Prostate gland (tissue), 2 donors: ENCODE measurements at regions of chr6 and their contacts with region 1.

Region 1: GRCh38 chr6:138428944-138429598 is 25.0 kb downstream of the HEBP2 start:
- DNase-seq: no peak
- H3K4me3 ChIP-seq: no peak overlapping the region
- H3K27ac ChIP-seq: no peak overlapping the region
- H3K4me1 ChIP-seq: no peaks in the 10 kb centered on the region
- H3K27me3 ChIP-seq: no peaks in the 10 kb centered on the region
- CTCF ChIP-seq: peak; percentile 34 to 79 (median 72)
- POLR2A ChIP-seq: no peak

Region 2: DNA sequence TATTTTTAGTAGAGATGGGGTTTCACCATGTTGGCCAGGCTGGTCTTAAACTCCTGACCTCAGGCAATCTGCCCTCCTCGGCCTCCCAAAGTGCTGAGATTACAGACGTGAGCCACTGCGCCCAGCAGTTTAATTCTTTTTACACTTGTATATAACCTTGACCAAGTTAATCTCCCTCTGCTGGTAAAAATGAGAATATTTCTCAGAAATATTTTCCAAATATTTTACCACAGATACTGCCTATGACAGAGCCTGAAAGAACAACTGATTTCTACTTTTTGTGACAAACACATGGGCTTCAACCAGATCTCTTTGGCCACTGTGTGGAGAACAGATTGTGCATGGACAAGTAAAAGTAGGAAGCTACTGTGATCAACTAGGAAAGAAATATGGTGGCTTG is 91.4 kb after region 1 on chr6:
- intact Hi-C with region 1: loop called (anchors 5 kb)
- DNase-seq: no peak
- H3K4me3 ChIP-seq: no peak overlapping the region
- H3K27ac ChIP-seq: no peak overlapping the region
- H3K4me1 ChIP-seq: no peaks in the 10 kb centered on the region
- H3K27me3 ChIP-seq: no peaks in the 10 kb centered on the region
- CTCF ChIP-seq: peak in 2 of 4 experiments; percentile 14 to 44
- POLR2A ChIP-seq: no peak

Region 3: DNA sequence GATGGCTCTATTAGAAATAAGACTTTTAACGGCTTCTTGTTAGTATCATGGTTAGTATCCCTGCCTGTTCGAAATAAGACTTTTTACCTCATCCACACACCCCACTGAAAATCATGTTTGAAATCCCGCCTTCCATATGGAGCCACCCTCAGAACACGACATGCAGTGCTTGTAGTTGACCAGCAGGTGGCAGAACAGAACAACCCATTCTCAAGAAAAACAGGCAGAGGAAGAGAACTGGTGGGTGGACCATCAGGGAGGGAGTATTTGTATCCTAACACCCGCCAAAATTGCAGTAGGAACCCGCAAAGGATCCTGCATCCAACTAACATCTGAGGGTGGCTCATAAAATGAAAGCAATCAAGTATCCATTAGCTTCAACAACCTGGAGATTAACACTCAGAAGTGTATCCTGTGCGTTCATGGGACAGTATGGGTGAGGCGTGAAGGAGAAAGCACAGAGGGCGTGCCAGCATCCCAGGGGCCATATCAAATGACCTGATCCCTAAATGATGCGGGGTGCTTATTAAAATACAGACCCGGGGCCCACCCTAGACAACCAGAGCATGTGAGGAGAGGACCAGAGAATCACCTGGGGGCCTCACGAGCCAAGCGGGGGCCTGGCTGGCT is 159.8 kb after region 1 on chr6:
- intact Hi-C with region 1: loop called (anchors 10 kb)
- DNase-seq: peak; percentile 52
- H3K4me3 ChIP-seq: no peak overlapping the region
- H3K27ac ChIP-seq: no peak overlapping the region
- H3K4me1 ChIP-seq: no peaks in the 10 kb centered on the region
- H3K27me3 ChIP-seq: no peaks in the 10 kb centered on the region
- CTCF ChIP-seq: peak; percentile 78 to 90 (median 86)
- POLR2A ChIP-seq: no peak

Region 4: DNA sequence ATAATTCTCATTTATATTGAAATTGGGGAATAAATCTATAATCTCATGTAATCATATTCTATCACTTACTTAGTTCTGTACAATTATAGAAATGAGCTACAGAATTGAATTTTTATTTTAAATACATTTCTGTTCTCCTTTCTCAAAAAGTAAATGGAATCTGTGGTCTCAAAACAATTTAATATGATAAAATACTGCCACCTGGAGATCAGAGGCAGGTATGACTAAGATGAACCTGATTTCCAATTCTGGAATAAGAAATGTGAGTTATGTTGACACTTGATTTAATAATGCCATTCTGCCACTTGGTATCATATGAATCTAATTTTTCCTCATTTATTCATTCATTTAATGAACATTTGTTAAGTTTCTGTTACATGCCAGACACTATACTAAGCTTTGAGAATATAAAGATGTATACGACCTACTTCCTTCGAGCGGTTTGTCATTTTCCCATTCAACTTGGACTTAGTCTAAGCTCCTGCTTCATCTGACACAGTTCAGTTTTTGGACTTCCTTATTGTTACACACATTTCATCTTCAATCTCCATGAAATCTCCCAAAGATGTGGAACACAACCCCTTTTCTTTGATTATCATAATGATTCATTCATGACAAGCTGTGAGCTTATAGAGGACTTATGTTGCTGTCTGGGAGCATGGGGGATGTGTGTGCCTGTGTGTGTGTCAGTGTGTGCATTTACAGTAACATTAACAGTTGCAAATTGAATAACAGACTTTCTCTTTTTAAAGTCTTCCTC is 337.0 kb after region 1 on chr6:
- intact Hi-C with region 1: loop called (anchors 10 kb)
- DNase-seq: no peak
- H3K4me3 ChIP-seq: no peak overlapping the region
- H3K27ac ChIP-seq: no peak overlapping the region
- H3K4me1 ChIP-seq: no peaks in the 10 kb centered on the region
- H3K27me3 ChIP-seq: no peaks in the 10 kb centered on the region
- CTCF ChIP-seq: peak in 3 of 4 experiments; percentile 53 to 87 (median 86)
- POLR2A ChIP-seq: no peak